Right cardiac atrium (tissue), 5 donors: ENCODE measurements at regions of chr11 and their contacts with region 1.

Region 1: GRCh38 chr11:125874556-125875124 is 12.8 kb upstream of the HYLS1 start:
- DNase-seq: peak in 2 of 3 donors; percentile 46 to 62
- ATAC-seq: peak; percentile 97 to 99
- H3K4me3 ChIP-seq: no peak overlapping the region
- H3K27ac ChIP-seq: no peak overlapping the region
- H3K4me1 ChIP-seq: no peaks in the 10 kb centered on the region
- H3K27me3 ChIP-seq: no peaks in the 10 kb centered on the region

Region 2: GRCh38 chr11:124961972-124962609 is 912.5 kb before region 1 on chr11:
- intact Hi-C with region 1: loop called in 2 of 4 experiments (anchors 5 kb)
- DNase-seq: no peak
- ATAC-seq: peak; percentile 84 to 85
- H3K4me3 ChIP-seq: no peak overlapping the region
- H3K27ac ChIP-seq: no peak overlapping the region
- H3K4me1 ChIP-seq: no peaks in the 10 kb centered on the region
- H3K27me3 ChIP-seq: no peaks in the 10 kb centered on the region

Region 3: DNA sequence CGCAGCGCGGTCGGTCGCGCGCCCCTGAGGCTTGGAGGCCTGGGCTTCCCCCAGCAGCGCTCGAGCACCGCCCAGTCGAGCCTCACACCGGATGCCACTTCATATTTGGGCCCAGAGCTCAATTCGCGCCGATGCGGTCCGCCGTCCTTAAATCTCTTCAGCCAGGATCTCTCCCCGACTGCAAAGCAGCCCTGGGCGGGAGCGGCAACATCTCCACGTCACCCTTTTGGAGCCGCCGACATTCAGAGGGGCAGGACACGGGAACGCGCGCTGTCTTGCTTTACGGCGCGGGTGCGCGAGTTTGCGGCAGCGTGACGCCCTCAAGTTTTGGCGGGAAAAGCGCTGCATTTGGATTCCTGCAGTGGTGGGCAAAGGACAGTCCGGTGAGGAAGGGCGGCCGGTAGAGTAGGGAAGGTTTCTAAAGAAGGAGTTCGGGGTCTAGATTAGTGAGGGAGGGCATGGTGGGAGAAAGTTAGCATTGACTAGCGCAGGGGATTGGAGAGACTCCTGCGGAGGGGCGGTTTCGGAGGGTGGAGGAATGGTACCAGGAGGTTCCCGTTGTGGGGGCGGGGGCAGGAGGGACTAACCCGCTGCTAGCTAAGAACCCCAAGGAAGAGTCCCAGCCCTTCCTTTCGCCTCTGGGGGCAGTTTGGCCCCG is 248.9 kb before region 1 on chr11:
- intact Hi-C with region 1: loop called in 1 of 4 experiments (anchors 10 kb)
- DNase-seq: peak; percentile 88 to 95 (median 95)
- ATAC-seq: peak; percentile 97 to 98
- H3K4me3 ChIP-seq: peak overlapping the region; percentile 50
- H3K27ac ChIP-seq: peak overlapping the region; percentile 77
- H3K4me1 ChIP-seq: peaks cover 5% of the 10 kb centered on the region
- H3K27me3 ChIP-seq: no peaks in the 10 kb centered on the region

Region 4: DNA sequence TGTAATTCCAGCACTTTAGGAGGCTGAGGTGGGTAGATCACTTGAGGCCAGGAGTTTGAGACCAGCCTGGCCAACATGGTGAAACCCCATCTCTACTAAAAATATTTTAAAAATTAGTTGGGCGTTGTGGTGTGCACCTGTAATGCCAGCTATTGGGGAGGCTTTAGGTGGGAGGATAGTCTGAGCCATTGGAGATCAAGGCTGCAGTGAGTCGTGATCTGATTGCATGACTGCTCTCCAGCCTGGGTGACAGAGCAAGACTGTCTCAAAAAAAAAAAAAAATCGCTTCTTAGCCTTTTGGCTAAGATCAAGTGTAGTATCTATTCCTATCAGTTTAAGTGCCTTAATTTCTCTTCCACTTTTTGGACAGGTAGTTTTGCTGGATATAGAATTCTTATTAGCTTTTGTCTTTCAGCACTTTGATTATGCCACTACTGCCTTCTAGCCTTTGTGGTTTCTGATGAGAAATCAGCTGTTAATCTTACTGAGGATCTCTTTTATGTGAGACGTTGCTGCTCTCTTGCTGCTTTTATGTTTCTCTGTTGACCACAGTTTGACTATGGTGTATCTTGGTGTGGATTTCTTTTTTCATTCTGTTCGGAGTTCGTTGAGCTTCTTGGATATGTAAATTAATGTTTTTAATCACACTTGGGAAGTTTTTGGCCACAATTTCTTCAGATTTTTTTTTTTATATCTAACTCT is 225.0 kb before region 1 on chr11:
- intact Hi-C with region 1: loop called in 1 of 4 experiments (anchors 10 kb)
- DNase-seq: no peak
- ATAC-seq: no peak
- H3K4me3 ChIP-seq: no peak overlapping the region
- H3K27ac ChIP-seq: no peak overlapping the region
- H3K4me1 ChIP-seq: no peaks in the 10 kb centered on the region
- H3K27me3 ChIP-seq: no peaks in the 10 kb centered on the region

Region 5: DNA sequence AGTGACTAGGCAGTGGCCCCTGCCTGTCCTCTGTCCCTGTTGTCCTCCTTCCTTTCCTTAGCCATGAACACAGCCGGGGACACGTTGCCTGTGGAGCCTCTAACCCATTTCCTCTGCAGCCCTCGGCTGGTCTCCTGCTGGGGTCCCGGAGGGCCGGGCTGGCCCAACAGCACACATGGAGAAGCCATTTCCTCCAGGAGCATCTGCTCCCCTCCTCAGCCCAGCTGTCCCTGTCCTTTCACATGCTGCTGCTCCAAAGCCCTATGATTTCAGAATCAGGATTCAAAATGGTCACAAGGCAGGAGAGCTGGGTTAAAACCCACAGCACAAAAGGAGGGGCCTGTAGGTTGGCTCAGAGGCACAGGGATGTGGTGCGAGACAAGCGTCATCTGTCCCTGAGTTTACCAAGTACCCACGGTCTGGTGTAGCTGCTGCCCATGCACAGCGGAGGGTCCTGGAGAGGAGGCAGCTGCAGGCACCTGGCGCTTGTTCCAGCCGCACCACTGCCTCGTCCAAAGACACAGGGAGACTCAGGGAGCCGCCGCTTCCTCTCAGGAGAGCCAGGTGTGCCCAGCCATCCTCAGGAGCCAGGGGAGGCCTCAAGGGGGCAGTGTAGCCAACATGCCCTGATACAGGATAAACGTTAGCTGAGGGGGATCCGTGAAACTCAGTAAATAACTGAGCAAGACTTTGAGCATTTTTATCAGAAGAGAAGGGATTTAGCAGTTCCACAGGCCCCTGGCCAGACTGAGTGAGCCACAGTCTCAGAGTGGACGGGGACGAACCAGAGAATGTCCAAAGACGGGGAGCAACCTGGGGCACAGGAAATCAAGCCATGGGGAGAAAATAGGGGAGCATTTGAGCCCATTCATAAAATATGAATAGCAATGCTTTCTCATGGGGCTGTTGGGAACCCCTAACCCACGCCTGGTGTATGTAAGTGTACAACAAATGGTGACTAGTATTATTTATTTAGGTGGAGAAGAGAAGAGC is 67.3 kb after region 1 on chr11:
- intact Hi-C with region 1: no loop called
- DNase-seq: peak; percentile 52 to 85 (median 78)
- ATAC-seq: peak; percentile 70 to 72
- H3K4me3 ChIP-seq: no peak overlapping the region
- H3K27ac ChIP-seq: no peak overlapping the region
- H3K4me1 ChIP-seq: no peaks in the 10 kb centered on the region
- H3K27me3 ChIP-seq: no peaks in the 10 kb centered on the region